Activated T-helper 2 cell treated with anti-CD3 and anti-CD28 coated beads, Interferon-gamma antibody, Interleukin-2, Interleukin-4, amounts not matched to agents 10 μg/mL and 5 μg/mL and 100 μg/mL, durations not matched to agents 14 hours and 24 hours and 36 hours (primary cell): ENCODE measurements at regions of chr5 and their contacts with region 1.

Region 1: GRCh38 chr5:10627160-10627701 is 63.4 kb downstream of the ANKRD33B start:
- DNase-seq: no peak
- H3K4me3 Mint-ChIP-seq: peak overlapping the region; percentile 76
- H3K27ac Mint-ChIP-seq: peak overlapping the region; percentile 91
- H3K4me1 Mint-ChIP-seq: peaks cover 51% of the 10 kb centered on the region
- H3K27me3 Mint-ChIP-seq: no peaks in the 10 kb centered on the region

Region 2: DNA sequence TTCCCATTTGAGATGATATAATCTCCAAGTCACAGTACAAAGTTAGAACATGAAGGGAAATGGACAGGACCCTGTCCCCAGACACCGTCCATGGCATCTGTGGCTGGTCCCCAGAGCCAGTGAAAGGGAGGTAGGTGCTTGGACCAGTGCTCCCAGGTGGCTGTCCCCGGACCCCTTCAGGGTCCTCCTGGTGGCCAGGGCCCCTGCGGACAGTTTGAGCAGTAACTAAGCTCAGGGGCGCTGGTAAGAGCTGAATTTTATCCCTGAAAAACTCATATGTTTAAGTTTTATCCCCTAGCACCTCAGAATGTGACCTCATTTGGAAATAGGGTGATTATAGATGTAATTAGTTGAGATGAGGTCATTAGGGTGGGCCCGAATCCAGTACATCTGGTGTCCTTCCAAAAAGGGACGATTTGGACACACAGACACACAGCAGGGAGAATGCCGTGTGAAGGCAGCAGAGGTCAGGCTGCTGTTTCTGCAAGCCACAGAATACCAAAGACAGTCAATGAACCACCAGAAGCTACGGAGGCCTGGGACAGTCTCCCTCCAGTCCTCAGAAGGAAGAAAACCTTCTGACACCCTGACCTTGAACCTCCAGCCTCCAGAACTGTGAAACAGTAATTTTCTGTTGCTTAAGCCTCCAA is 562.6 kb before region 1 on chr5:
- intact Hi-C with region 1: no loop called
- DNase-seq: no peak
- H3K4me3 Mint-ChIP-seq: no peak overlapping the region
- H3K27ac Mint-ChIP-seq: no peak overlapping the region
- H3K4me1 Mint-ChIP-seq: no peaks in the 10 kb centered on the region
- H3K27me3 Mint-ChIP-seq: no peaks in the 10 kb centered on the region

Region 3: GRCh38 chr5:10452768-10453331 is 174.4 kb before region 1 on chr5:
- intact Hi-C with region 1: loop called (anchors 1 kb)
- DNase-seq: no peak
- H3K4me3 Mint-ChIP-seq: no peak overlapping the region
- H3K27ac Mint-ChIP-seq: no peak overlapping the region
- H3K4me1 Mint-ChIP-seq: peaks cover 8% of the 10 kb centered on the region
- H3K27me3 Mint-ChIP-seq: no peaks in the 10 kb centered on the region

Region 4: GRCh38 chr5:10595678-10596309 is 31.4 kb before region 1 on chr5:
- intact Hi-C with region 1: loop called (anchors 1 kb)
- DNase-seq: peak; percentile 28
- H3K4me3 Mint-ChIP-seq: peak overlapping the region; percentile 7
- H3K27ac Mint-ChIP-seq: peak overlapping the region; percentile 79
- H3K4me1 Mint-ChIP-seq: peaks cover 69% of the 10 kb centered on the region
- H3K27me3 Mint-ChIP-seq: no peaks in the 10 kb centered on the region

Region 5: DNA sequence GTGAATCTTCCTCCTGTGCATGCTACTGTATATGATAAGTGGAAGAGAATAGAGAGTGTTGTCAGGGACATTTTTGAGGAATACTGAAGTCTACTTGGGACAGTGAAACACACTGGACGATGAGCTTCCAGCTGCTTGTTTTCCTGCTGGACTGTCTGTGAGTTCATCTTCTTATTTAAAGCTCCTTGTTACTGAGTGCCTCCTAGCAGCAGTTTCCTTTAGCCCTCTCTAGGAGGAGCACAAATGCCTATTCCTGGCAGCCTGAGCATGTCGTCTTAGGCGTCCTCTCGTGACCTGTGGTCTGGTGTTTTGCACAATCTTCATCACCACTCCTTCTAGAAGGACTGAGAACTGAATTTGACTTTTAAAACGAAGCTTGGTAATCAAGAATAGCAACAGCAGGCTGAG is 19.6 kb before region 1 on chr5:
- intact Hi-C with region 1: loop called (anchors 1 kb)
- DNase-seq: no peak
- H3K4me3 Mint-ChIP-seq: peak overlapping the region; percentile 77
- H3K27ac Mint-ChIP-seq: peak overlapping the region; percentile 96
- H3K4me1 Mint-ChIP-seq: peaks cover 45% of the 10 kb centered on the region
- H3K27me3 Mint-ChIP-seq: no peaks in the 10 kb centered on the region

Region 6: DNA sequence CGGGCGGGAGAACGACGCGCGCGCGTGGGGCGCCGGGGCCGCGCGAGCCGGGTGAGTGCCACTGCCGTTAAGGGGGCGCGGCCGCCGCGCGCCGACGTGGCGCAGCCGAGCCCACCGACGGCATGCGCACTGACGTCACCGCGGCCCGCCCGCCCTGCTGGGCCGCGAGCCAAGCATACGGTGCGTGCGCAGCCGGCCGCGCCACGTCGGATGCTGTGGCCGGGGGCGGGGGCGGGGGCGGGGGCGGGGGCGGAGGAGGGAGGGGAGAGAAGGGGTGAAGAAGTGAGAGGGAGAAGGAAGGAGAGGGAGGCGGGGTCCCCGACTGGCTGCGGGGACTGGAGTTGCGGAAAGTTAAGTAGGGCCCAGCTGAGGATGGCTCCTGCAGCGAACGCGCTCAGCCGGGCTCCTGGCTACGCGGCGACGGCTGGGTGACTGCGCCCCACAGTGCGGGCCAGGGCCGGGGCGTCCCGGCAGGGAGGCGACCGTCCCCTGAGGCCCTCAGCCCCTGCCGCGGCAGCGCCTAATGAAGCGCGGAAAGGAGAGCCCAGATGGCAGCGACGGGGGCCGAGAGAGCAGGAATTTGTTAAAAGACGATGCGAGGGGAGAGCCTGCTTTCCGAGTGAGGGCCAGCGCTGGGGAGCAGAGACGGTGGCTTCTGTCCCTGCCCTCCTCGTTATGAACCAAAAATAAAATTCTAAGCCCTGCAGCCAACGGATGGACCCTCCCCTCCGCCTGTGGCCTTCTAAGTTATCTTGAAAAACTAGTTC is 134.1 kb after region 1 on chr5 and contains the start of gene DAP:
- intact Hi-C with region 1: loop called (anchors 2 kb)
- DNase-seq: peak; percentile 87
- H3K4me3 Mint-ChIP-seq: peak within 1 kb of the TSS; percentile 97
- H3K27ac Mint-ChIP-seq: peak within 1 kb of the TSS; percentile 84
- H3K4me1 Mint-ChIP-seq: peaks cover 24% of the 10 kb centered on the region
- H3K27me3 Mint-ChIP-seq: peaks cover 15% of the 10 kb centered on the region
- total RNA-seq, gene DAP: 51.3 and 56.6 TPM in 2 replicates

Region 7: GRCh38 chr5:12169536-12169935 is 1542.3 kb after region 1 on chr5:
- intact Hi-C with region 1: no loop called
- DNase-seq: no peak
- H3K4me3 Mint-ChIP-seq: no peak overlapping the region
- H3K27ac Mint-ChIP-seq: no peak overlapping the region
- H3K4me1 Mint-ChIP-seq: no peaks in the 10 kb centered on the region
- H3K27me3 Mint-ChIP-seq: no peaks in the 10 kb centered on the region